ENCODE measurements at regions of chr19 and their contacts with region 1.

Region 1: DNA sequence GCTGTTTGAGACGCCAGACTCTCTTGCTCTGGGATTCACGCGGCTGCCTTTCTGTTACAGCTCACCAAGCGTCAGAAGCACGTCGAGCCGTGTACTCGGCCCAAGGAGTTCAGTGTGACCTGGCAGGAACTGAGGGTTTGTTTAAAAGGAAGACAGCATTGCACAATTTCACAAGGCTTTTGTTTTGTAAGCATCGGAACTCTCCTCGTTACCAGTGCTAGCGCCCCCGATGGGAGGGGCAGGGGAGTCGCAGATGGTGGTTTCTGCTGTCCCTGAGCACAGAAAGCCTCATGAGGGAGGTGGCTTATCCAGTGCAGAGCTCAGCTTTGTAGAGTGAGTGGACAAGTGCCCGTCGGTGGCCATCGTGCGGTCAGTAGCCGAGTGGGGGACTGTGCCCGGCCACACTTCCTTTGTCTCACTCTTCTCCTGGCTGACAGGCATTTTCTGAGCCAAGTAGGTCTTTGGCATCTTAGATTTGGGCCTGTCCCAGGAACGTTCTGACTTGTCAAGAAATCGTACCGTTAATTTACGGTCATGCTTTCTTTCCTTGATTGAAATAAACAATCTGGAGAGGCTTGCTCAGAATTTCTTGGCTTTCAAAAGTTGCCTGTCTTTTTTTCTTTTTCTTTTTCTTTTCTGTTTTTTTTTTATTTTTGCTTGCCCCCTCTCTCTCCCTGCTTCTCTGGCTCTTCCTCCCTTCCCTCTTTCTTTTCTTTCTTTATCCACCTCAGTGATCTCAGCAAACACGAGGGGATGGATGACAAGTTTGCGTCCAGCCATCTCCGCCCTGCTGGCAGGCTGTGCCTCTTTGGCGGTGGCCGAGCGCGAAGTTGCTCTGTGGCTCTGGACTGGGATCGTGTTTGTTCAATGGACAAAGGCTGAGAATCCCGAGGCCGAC is 7.7 kb downstream of the KDM4B start:
- DNase-seq: peak; percentile 89
- ATAC-seq: peak; percentile 53
- H3K4me3 ChIP-seq: peak overlapping the region; percentile 5; the same call in 1 of the 2 replicates
- H3K27ac ChIP-seq: peak overlapping the region; percentile 35
- H3K4me1 ChIP-seq: peaks cover 41% of the 10 kb centered on the region
- H3K27me3 ChIP-seq: no peaks in the 10 kb centered on the region
- CTCF ChIP-seq: peak; percentile 84

Region 2: DNA sequence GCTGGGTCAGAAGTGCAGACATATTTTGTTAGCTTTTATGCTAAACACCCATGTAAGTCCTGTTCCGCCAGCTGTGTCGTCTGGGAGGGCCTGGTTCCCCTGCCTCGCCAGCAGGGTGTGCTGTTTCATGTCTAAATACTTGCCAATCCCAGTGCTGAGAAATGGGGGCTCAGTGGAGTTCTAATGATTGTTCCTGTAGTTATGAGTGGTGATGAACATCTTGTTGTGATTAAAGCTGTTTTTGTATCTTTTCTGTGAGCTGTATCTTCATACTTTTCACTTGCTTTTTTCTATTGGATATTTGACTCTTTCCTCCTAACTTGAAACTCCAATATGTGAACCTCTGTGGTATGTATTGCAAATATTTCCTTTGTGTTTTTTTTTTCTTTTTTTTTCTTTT is 25.0 kb after region 1 on chr19:
- CTCF ChIA-PET with region 1: no interaction called
- POLR2A ChIA-PET with region 1: no interaction called
- intact Hi-C with region 1: loop called (anchors 1 kb)
- DNase-seq: peak; percentile 76
- ATAC-seq: peak; percentile 77
- H3K4me3 ChIP-seq: peak overlapping the region; percentile 17; the same call in 1 of the 2 replicates
- H3K27ac ChIP-seq: peak overlapping the region; percentile 78
- H3K4me1 ChIP-seq: peaks cover 20% of the 10 kb centered on the region
- H3K27me3 ChIP-seq: no peaks in the 10 kb centered on the region
- CTCF ChIP-seq: peak; percentile 97

Region 3: DNA sequence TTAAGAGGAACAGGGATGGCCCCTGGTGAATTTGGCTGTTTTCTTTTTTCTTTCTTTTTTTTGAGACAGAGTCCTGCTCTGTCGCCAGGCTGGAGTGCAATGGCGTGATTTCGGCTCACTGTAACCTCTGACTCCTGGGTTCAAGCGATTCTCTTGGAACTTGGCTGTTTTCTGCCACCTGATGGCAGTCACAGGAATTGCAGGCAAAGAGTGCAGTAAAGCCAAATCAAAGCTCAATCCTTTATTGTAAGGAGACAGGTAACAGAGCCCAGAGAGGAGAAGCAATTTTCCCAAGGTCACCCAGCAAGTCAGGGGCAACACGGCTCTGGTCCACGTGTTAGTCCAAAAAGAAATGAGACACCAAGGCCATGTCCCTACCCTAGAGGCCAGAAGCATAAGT is 584.9 kb after region 1 on chr19:
- CTCF ChIA-PET with region 1: interaction called, 5 read pairs
- POLR2A ChIA-PET with region 1: interaction called, 13 read pairs
- intact Hi-C with region 1: no loop called
- DNase-seq: peak; percentile 55
- ATAC-seq: no peak
- H3K4me3 ChIP-seq: no peak overlapping the region
- H3K27ac ChIP-seq: no peak overlapping the region
- H3K4me1 ChIP-seq: no peaks in the 10 kb centered on the region
- H3K27me3 ChIP-seq: peaks cover 8% of the 10 kb centered on the region
- CTCF ChIP-seq: peak; percentile 88